Calu3 (cell line): ENCODE measurements at regions of chr9 and their contacts with region 1.

Region 1: DNA sequence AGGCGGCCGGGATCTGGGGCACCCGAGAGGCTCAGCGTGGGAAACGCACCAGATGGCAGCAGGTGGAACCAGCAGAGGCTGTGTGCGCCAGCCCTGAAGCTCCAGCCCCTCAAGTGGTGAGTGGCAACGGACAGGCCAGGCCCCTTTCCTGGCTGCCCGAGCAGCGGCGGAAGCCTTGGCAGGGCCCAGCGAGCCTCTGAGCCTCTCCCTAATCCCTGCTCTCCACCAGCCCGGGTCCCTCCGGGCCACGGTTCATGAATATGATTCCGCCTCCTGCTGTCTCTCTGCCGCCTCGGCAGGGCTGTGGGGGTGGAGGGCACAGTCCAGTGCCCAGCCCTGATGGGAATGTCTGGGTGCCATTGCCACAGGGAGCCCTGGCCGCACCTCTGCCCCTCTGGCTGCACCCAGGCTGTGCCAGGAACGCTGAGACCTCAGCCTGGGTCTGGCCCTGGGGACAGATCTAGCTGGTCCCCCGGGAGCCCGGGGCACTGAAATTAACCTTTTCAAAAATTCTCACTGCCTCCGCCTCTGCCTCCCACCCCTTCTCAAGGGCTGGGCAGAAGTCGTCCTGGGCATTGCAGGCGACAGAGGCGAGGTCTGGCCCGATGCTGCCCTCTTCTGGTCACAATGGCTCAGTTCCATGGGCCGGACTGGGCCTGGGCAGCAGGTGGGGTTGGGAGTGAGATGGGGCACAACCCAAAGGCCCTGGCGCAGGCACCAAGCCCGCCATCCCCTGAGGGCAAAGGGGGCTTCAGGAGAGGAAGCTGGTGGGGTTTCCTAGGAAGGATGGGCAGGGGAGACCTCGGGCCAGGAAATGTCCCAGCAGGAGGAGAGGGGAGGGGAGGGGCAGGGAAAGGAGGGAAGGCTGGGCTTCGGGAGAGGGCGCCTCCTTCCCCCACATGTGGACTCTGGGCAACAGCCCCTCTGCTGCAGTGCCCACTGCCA is 20.3 kb downstream of the CCDC187 start:
- DNase-seq: peak; percentile 81
- H3K4me3 Mint-ChIP-seq: peak overlapping the region; percentile 17
- H3K27ac Mint-ChIP-seq: no peak overlapping the region
- H3K4me1 Mint-ChIP-seq: no peaks in the 10 kb centered on the region
- H3K27me3 Mint-ChIP-seq: peaks cover 20% of the 10 kb centered on the region
- CTCF ChIP-seq: peak; percentile 48

Region 2: GRCh38 chr9:136143216-136144001 is 140.2 kb before region 1 on chr9:
- CTCF ChIA-PET with region 1: no interaction called
- intact Hi-C with region 1: loop called (anchors 10 kb)
- DNase-seq: peak; percentile 45
- H3K4me3 Mint-ChIP-seq: no peak overlapping the region
- H3K27ac Mint-ChIP-seq: no peak overlapping the region
- H3K4me1 Mint-ChIP-seq: no peaks in the 10 kb centered on the region
- H3K27me3 Mint-ChIP-seq: peaks cover 22% of the 10 kb centered on the region
- CTCF ChIP-seq: peak; percentile 19